Activated CD4-positive, alpha-beta memory T cell treated with anti-CD3 and anti-CD28 coated beads, Interleukin-2, amount 10 ng/mL, durations not matched to agents 7 days and 5 days (primary cell): ENCODE measurements at regions of chr2 and their contacts with region 1.

Region 1: DNA sequence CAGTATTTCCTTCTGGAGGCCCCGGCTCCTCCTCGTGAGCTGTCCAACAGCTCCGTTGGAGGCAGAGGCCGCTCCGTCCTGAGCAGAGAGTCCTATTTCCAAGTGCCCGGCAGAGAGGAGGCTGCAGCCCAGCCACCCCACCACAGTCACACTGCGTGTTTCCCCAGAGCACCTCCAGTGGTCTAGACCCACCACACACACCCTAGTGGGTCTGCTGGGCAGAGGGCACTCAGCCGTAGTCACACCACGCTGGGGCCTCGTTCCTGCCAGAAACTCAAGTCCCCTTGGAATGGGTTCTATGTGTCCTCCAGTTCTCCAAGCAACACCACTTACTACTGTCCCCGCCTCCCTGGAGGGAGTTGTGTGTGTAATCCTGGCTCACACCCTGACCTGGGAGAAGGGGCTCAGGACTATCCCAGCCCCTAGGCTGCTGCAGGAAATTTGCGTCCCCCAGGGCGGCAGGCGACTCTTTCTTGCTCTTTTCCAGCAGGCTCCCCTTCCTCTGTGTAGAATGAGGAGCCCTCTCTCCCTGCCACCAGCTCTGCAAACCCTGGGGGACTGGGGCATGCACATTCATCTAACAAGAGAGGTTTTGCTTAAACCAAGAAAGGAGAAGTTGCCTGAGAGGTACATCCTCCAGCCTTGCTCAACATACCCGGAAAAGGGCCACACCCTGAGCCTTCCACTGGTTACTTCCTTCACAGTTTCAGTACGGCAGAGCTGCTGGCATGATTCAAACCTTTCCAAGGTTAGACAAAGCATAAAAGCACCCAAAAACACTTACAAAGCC is 114.1 kb downstream of the NDUFA10 start:
- DNase-seq: peak; percentile 78
- H3K4me3 Mint-ChIP-seq: peak overlapping the region; percentile 57
- H3K27ac Mint-ChIP-seq: no peak overlapping the region
- H3K4me1 Mint-ChIP-seq: peaks cover 1% of the 10 kb centered on the region
- H3K27me3 Mint-ChIP-seq: no peaks in the 10 kb centered on the region

Region 2: DNA sequence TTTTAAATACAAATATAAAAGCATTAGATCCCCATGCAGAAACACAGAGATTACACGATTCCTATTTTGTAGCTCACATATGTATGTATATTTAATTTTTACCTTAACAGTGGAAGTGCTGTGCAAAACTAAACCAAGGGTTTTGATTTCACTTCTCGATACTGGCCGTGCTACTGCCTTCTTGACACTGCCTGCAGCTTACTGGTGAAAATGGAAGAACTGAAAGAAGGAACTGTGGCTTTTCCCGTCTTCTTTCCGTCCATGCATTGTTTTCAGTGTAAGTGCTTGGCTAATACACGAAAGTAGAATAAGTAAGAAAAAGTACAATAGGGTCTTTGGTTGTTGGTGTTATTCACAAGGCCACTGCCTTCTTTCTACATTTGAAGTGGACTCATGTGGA is 15.4 kb before region 1 on chr2:
- CTCF ChIA-PET with region 1: interaction called, 3 read pairs
- POLR2A ChIA-PET with region 1: interaction called, 14 read pairs
- DNase-seq: no peak
- H3K4me3 Mint-ChIP-seq: no peak overlapping the region
- H3K27ac Mint-ChIP-seq: no peak overlapping the region
- H3K4me1 Mint-ChIP-seq: no peaks in the 10 kb centered on the region
- H3K27me3 Mint-ChIP-seq: peaks cover 23% of the 10 kb centered on the region

Region 3: DNA sequence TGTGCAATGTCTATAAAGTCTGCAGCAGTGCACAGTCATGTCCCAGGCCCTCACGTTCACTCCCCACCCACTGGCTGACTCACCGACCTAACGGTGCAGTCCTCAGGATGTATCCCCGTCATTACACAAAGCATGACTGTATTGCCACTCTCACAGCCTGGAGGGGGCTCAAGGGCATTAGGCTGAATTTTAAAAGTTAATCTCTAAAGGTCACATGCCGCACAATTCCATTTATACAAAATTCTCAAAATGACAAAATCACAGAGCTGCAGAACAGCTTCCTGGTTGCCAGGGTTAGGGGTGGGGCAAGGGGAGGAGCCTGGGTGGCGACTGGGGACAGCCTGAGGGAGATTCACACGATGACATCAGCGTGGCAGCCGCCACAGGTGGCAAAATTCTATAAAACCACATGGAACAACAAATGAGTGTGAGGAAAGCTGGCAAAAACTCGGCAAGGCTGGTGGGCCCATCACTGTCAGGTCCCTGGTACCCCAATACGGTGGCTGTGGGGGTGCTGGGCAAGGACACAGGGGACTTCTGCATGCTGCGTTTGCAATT is 16.5 kb after region 1 on chr2:
- CTCF ChIA-PET with region 1: interaction called, 12 read pairs
- POLR2A ChIA-PET with region 1: interaction called, 51 read pairs
- DNase-seq: peak; percentile 82
- H3K4me3 Mint-ChIP-seq: peak overlapping the region; percentile 74
- H3K27ac Mint-ChIP-seq: peak overlapping the region; percentile 88
- H3K4me1 Mint-ChIP-seq: peaks cover 52% of the 10 kb centered on the region
- H3K27me3 Mint-ChIP-seq: peaks cover 10% of the 10 kb centered on the region

Region 4: GRCh38 chr2:239934571-239935171 is 23.6 kb after region 1 on chr2:
- CTCF ChIA-PET with region 1: interaction called, 17 read pairs
- POLR2A ChIA-PET with region 1: interaction called, 6 read pairs
- DNase-seq: peak; percentile 73
- H3K4me3 Mint-ChIP-seq: no peak overlapping the region
- H3K27ac Mint-ChIP-seq: no peak overlapping the region
- H3K4me1 Mint-ChIP-seq: peaks cover 9% of the 10 kb centered on the region
- H3K27me3 Mint-ChIP-seq: no peaks in the 10 kb centered on the region

Region 5: GRCh38 chr2:239944694-239945551 is 33.9 kb after region 1 on chr2:
- CTCF ChIA-PET with region 1: no interaction called
- POLR2A ChIA-PET with region 1: interaction called, 21 read pairs
- DNase-seq: peak; percentile 75
- H3K4me3 Mint-ChIP-seq: peak overlapping the region; percentile 14
- H3K27ac Mint-ChIP-seq: peak overlapping the region; percentile 85
- H3K4me1 Mint-ChIP-seq: peaks cover 12% of the 10 kb centered on the region
- H3K27me3 Mint-ChIP-seq: no peaks in the 10 kb centered on the region

Region 6: GRCh38 chr2:240021488-240022104 is 110.5 kb after region 1 on chr2:
- CTCF ChIA-PET with region 1: interaction called, 3 read pairs
- POLR2A ChIA-PET with region 1: interaction called, 14 read pairs
- DNase-seq: peak; percentile 71
- H3K4me3 Mint-ChIP-seq: no peak overlapping the region
- H3K27ac Mint-ChIP-seq: no peak overlapping the region
- H3K4me1 Mint-ChIP-seq: peaks cover 20% of the 10 kb centered on the region
- H3K27me3 Mint-ChIP-seq: no peaks in the 10 kb centered on the region

Region 7: DNA sequence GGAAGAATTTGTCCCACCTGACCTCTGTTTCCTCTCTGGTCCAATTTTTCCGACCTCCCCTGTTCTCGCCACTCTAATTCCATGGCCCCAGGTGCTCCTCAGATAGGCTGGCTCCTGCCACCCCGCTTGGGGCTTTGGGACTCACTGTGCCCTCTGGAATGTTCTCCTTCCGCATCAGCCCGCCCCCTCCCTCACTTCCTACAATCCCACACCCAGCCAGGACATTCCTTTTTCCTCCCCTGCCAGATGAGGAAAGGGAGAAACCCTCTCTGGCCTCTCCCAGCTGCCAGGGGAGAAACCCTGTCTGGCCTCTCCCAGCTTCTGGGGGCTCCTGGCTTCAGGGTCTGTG is 122.3 kb after region 1 on chr2:
- CTCF ChIA-PET with region 1: no interaction called
- POLR2A ChIA-PET with region 1: no interaction called
- DNase-seq: no peak
- H3K4me3 Mint-ChIP-seq: no peak overlapping the region
- H3K27ac Mint-ChIP-seq: no peak overlapping the region
- H3K4me1 Mint-ChIP-seq: no peaks in the 10 kb centered on the region
- H3K27me3 Mint-ChIP-seq: peaks cover 40% of the 10 kb centered on the region